IMR-90 (cell line): ENCODE measurements at regions of chr4 and their contacts with region 1.

Region 1: DNA sequence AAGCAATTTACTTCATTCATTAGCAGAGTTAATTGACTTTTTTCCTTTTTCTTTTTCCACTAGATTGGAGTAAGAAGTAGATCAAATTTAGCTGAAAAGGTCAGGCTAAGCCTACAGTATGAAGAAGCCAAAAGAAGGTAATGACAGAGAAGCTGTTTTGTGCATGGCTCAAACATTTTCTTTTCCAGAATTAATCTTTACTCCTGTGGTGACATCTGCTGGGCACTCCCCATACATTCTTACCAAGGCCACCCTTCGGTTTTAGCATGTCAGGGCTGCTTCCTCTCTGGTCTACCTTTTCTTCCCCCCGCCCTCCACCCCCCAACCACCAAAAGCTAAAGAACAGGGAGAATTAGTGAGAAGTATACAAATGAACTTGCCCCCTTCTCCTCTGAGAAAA is 70.2 kb downstream of the CLDN22 start:
- DNase-seq: peak; percentile 52
- ATAC-seq: peak; percentile 75
- H3K4me3 ChIP-seq: no peak overlapping the region
- H3K27ac ChIP-seq: no peak overlapping the region
- H3K4me1 ChIP-seq: no peaks in the 10 kb centered on the region
- H3K27me3 ChIP-seq: no peaks in the 10 kb centered on the region
- CTCF ChIP-seq: peak; percentile 57
- POLR2A ChIP-seq: no peak
- RAD21 ChIP-seq: peak; percentile 68

Region 2: GRCh38 chr4:183388777-183389176 is 138.9 kb after region 1 on chr4:
- CTCF ChIA-PET with region 1: no interaction called
- POLR2A ChIA-PET with region 1: interaction called, 35 read pairs
- dilution Hi-C with region 1: no loop called
- in situ Hi-C with region 1: no loop called
- intact Hi-C with region 1: no loop called
- DNase-seq: no peak
- ATAC-seq: no peak
- H3K4me3 ChIP-seq: no peak overlapping the region
- H3K27ac ChIP-seq: no peak overlapping the region
- H3K4me1 ChIP-seq: no peaks in the 10 kb centered on the region
- H3K27me3 ChIP-seq: peaks cover 38% of the 10 kb centered on the region
- CTCF ChIP-seq: no peak
- POLR2A ChIP-seq: no peak
- RAD21 ChIP-seq: no peak